ENCODE measurements at regions of chr20 and their contacts with region 1.

Region 1: DNA sequence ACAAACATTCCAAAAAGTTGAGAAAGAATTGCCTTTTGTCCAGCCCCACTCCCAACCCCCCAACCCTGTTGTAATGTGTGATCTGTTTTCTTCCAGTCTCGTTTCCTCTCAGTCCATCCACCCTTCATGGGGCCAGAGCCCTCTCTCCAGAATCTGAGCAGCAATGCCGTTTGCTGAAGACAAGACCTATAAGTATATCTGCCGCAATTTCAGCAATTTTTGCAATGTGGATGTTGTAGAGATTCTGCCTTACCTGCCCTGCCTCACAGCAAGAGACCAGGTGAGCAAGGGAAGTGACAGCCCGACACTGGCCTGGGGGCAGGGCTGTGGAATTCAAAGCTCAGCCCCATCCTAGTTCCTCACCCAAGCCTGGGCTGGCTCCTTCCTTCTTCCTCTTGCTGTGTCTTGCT is 7.8 kb downstream of the MAVS start:
- DNase-seq: no peak
- ATAC-seq: peak; percentile 38
- H3K4me3 Mint-ChIP-seq: no peak overlapping the region
- H3K27ac Mint-ChIP-seq: peak overlapping the region; percentile 12
- H3K4me1 Mint-ChIP-seq: peaks cover 8% of the 10 kb centered on the region
- H3K27me3 Mint-ChIP-seq: no peaks in the 10 kb centered on the region

Region 2: GRCh38 chr20:3652676-3653596 is 201.5 kb before region 1 on chr20:
- CTCF ChIA-PET with region 1: no interaction called
- DNase-seq: peak; percentile 43
- ATAC-seq: peak; percentile 64
- H3K4me3 Mint-ChIP-seq: no peak overlapping the region
- H3K27ac Mint-ChIP-seq: no peak overlapping the region
- H3K4me1 Mint-ChIP-seq: peaks cover 16% of the 10 kb centered on the region
- H3K27me3 Mint-ChIP-seq: peaks cover 13% of the 10 kb centered on the region

Region 3: DNA sequence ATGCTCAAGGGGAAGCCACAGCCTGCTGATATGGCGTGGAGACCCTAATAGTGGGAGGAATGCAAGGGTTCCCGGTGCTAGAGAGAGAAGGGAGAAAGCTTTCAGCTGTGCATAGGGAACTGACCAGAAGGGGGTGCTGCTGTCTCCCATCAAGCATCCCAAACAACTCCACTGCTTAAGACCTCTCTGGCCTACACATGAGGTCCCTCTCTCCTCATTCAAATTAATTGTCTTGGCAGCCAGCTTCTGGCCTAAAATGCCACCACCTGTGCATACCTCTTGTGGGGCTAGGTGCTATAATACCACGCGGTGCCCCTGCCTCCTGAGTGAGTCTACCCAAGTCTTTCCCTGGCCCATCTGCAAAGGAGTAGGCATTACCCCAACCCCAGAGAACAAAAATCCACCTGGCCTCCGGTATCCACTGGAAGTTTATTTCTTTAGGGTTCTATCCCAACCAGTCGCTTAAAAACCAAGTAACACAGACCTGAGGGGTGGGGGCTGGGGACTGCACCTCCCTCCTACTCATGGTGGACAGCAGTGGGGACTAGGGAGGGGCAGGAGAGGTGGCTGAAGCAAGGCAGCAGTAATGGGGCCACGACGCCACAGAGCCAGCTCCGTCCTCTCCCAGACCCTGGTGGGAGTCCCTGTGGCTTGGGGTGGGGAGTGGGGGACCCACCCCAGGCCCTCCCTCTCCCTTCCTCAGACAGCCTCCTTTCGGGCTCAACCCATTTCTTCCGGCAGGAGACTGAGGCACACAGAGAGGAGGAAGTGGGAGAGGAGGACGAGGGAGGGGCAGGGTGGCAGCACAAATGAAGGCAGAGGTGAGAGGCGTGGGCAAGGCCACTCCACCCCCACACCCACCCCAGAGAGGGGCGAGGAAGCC is 101.1 kb before region 1 on chr20:
- CTCF ChIA-PET with region 1: interaction called, 38 read pairs
- DNase-seq: peak; percentile 75
- ATAC-seq: peak; percentile 72
- H3K4me3 Mint-ChIP-seq: no peak overlapping the region
- H3K27ac Mint-ChIP-seq: no peak overlapping the region
- H3K4me1 Mint-ChIP-seq: peaks cover 7% of the 10 kb centered on the region
- H3K27me3 Mint-ChIP-seq: peaks cover 4% of the 10 kb centered on the region

Region 4: GRCh38 chr20:3786665-3787323 is 67.7 kb before region 1 on chr20 and contains the start of gene CENPB:
- CTCF ChIA-PET with region 1: interaction called, 65 read pairs
- DNase-seq: peak; percentile 91
- ATAC-seq: peak; percentile 95
- H3K4me3 Mint-ChIP-seq: peak within 1 kb of the TSS; percentile 83
- H3K27ac Mint-ChIP-seq: peak within 1 kb of the TSS; percentile 81
- H3K4me1 Mint-ChIP-seq: peaks cover 34% of the 10 kb centered on the region
- H3K27me3 Mint-ChIP-seq: no peaks in the 10 kb centered on the region
- total RNA-seq, gene CENPB: 76.5 to 76.8 TPM

Region 5: GRCh38 chr20:3820048-3820900 is 34.2 kb before region 1 on chr20 and contains the start of gene AP5S1:
- CTCF ChIA-PET with region 1: interaction called, 18 read pairs
- DNase-seq: peak; percentile 97
- ATAC-seq: peak; percentile 82
- H3K4me3 Mint-ChIP-seq: peak within 1 kb of the TSS; percentile 85
- H3K27ac Mint-ChIP-seq: peak within 1 kb of the TSS; percentile 90
- H3K4me1 Mint-ChIP-seq: peaks cover 47% of the 10 kb centered on the region
- H3K27me3 Mint-ChIP-seq: no peaks in the 10 kb centered on the region
- total RNA-seq, gene AP5S1: 13.8 to 15.5 TPM

Region 6: DNA sequence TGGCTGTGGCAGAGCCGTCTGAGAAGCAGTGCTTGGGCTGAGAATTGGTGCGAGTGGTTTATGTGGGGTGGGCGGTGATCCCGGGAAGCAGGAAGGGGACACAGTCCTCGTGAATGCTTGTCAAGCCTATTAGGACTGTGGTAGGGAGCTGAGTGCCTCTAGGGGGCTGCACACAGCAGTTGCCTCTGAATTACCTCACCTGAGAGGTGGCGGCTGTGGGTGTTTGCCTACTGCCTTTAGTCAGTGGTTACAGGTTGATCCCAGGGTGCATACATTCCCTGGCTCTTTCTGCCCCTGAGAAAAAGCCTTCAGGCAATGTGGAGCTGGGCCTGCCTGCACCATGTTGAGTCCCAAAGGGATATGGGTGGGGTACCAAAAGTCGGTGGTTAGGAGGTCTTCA is 28.9 kb before region 1 on chr20:
- CTCF ChIA-PET with region 1: interaction called, 18 read pairs
- DNase-seq: no peak
- ATAC-seq: no peak
- H3K4me3 Mint-ChIP-seq: no peak overlapping the region
- H3K27ac Mint-ChIP-seq: no peak overlapping the region
- H3K4me1 Mint-ChIP-seq: peaks cover 9% of the 10 kb centered on the region
- H3K27me3 Mint-ChIP-seq: no peaks in the 10 kb centered on the region

Region 7: GRCh38 chr20:4053071-4053919 is 198.8 kb after region 1 on chr20:
- CTCF ChIA-PET with region 1: no interaction called
- DNase-seq: no peak
- ATAC-seq: no peak
- H3K4me3 Mint-ChIP-seq: no peak overlapping the region
- H3K27ac Mint-ChIP-seq: no peak overlapping the region
- H3K4me1 Mint-ChIP-seq: no peaks in the 10 kb centered on the region
- H3K27me3 Mint-ChIP-seq: peaks cover 5% of the 10 kb centered on the region

Measured in activated CD8-positive, alpha-beta memory T cell treated with anti-CD3 and anti-CD28 coated beads, Interleukin-2, amount 10 ng/mL, durations not matched to agents 7 days and 5 days (primary cell).